PC-3 (cell line): ENCODE measurements at regions of chr17 and their contacts with region 1.

Region 1: DNA sequence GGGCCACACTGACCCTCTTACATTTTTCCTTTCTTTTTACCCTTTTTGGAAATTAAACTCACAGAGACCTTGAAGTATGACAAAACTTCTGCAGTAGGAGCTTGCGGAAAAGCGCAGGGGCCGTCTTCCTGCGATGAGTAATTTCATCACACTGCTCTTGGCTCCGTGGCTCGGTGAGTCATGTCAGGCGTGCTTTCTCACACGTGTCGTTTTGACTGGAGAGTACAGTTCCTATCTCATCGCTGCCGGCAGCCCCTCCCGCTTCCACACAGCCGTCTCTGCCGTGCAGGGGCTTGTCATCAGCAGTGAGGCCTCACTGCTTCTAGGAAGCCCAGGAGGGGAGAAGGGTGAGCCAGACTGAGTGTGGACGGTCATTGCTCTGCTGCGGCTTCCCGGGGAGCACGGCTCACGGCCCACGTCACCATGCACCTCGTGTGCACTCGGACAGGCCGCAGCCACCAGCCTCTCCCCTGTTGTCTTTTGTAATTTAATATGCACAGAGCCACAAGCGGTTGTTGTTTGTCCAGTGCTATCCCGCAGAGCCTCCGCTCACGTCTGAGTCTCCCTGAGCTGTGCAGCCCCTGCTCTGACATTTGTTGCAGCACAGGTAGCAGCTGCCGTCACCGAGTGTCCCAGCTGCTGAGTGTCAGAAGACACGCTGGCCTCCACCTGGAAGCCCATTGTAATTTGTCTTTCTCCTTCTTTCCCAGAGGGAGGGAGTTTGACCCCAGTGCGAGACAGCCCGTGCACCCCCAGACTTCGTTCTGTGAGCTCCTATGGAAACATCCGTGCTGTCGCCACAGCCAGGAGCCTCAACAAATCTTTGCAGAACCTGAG is 99.4 kb upstream of the CHMP6 start:
- DNase-seq: peak; percentile 98
- ATAC-seq: peak; percentile 72
- H3K4me3 ChIP-seq: peak overlapping the region; percentile 53
- H3K27ac ChIP-seq: peak overlapping the region; percentile 91
- H3K4me1 ChIP-seq: peaks cover 36% of the 10 kb centered on the region
- H3K27me3 ChIP-seq: no peaks in the 10 kb centered on the region
- CTCF ChIP-seq: no peak

Region 2: GRCh38 chr17:80454557-80455335 is 437.5 kb before region 1 on chr17:
- CTCF ChIA-PET with region 1: no interaction called
- POLR2A ChIA-PET with region 1: no interaction called
- intact Hi-C with region 1: loop called (anchors 10 kb)
- DNase-seq: peak; percentile 99
- ATAC-seq: peak; percentile 91
- H3K4me3 ChIP-seq: peak overlapping the region; percentile 80
- H3K27ac ChIP-seq: peak overlapping the region; percentile 69
- H3K4me1 ChIP-seq: peaks cover 20% of the 10 kb centered on the region
- H3K27me3 ChIP-seq: no peaks in the 10 kb centered on the region
- CTCF ChIP-seq: no peak

Region 3: DNA sequence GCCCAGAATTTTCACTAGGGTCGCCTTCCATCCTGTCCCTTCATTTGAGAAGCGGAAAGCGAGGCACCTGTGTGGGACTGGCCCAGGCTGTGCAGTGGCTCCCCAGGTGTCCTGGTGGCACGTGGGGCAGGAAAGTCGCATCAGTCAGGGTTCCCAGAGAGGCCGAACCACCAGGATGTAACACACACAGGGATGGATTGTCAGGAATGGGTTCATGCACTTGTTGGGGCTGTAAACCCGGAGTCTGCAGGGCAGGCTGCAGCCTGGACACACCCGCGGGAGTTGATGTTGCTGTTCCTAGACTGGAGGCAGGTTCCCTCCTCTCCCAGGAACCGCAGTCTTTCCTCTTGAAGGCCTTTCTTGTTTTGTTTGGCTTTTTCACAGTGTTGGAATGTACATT is 378.3 kb before region 1 on chr17:
- CTCF ChIA-PET with region 1: no interaction called
- POLR2A ChIA-PET with region 1: no interaction called
- intact Hi-C with region 1: no loop called
- DNase-seq: no peak
- ATAC-seq: no peak
- H3K4me3 ChIP-seq: no peak overlapping the region
- H3K27ac ChIP-seq: no peak overlapping the region
- H3K4me1 ChIP-seq: peaks cover 6% of the 10 kb centered on the region; the same call in 1 of the 2 replicates
- H3K27me3 ChIP-seq: no peaks in the 10 kb centered on the region; the same call in 1 of the 2 replicates
- CTCF ChIP-seq: no peak

Region 4: GRCh38 chr17:80773243-80773991 is 118.8 kb before region 1 on chr17:
- CTCF ChIA-PET with region 1: no interaction called
- POLR2A ChIA-PET with region 1: no interaction called
- intact Hi-C with region 1: no loop called
- DNase-seq: no peak
- ATAC-seq: peak; percentile 48; the same call in 1 of the 2 replicates
- H3K4me3 ChIP-seq: no peak overlapping the region
- H3K27ac ChIP-seq: no peak overlapping the region
- H3K4me1 ChIP-seq: no peaks in the 10 kb centered on the region
- H3K27me3 ChIP-seq: no peaks in the 10 kb centered on the region
- CTCF ChIP-seq: no peak

Region 5: GRCh38 chr17:80826955-80827645 is 65.1 kb before region 1 on chr17:
- CTCF ChIA-PET with region 1: no interaction called
- POLR2A ChIA-PET with region 1: no interaction called
- intact Hi-C with region 1: loop called (anchors 2 kb)
- DNase-seq: peak; percentile 96
- ATAC-seq: peak; percentile 99
- H3K4me3 ChIP-seq: no peak overlapping the region
- H3K27ac ChIP-seq: peak overlapping the region; percentile 96
- H3K4me1 ChIP-seq: peaks cover 36% of the 10 kb centered on the region
- H3K27me3 ChIP-seq: no peaks in the 10 kb centered on the region
- CTCF ChIP-seq: no peak; the same call in 1 of the 2 replicates

Region 6: GRCh38 chr17:80832888-80833583 is 59.2 kb before region 1 on chr17:
- CTCF ChIA-PET with region 1: no interaction called
- POLR2A ChIA-PET with region 1: no interaction called
- intact Hi-C with region 1: loop called (anchors 2 kb)
- DNase-seq: peak; percentile 96
- ATAC-seq: peak; percentile 98
- H3K4me3 ChIP-seq: peak overlapping the region; percentile 67
- H3K27ac ChIP-seq: peak overlapping the region; percentile 97
- H3K4me1 ChIP-seq: peaks cover 30% of the 10 kb centered on the region
- H3K27me3 ChIP-seq: no peaks in the 10 kb centered on the region
- CTCF ChIP-seq: no peak

Region 7: DNA sequence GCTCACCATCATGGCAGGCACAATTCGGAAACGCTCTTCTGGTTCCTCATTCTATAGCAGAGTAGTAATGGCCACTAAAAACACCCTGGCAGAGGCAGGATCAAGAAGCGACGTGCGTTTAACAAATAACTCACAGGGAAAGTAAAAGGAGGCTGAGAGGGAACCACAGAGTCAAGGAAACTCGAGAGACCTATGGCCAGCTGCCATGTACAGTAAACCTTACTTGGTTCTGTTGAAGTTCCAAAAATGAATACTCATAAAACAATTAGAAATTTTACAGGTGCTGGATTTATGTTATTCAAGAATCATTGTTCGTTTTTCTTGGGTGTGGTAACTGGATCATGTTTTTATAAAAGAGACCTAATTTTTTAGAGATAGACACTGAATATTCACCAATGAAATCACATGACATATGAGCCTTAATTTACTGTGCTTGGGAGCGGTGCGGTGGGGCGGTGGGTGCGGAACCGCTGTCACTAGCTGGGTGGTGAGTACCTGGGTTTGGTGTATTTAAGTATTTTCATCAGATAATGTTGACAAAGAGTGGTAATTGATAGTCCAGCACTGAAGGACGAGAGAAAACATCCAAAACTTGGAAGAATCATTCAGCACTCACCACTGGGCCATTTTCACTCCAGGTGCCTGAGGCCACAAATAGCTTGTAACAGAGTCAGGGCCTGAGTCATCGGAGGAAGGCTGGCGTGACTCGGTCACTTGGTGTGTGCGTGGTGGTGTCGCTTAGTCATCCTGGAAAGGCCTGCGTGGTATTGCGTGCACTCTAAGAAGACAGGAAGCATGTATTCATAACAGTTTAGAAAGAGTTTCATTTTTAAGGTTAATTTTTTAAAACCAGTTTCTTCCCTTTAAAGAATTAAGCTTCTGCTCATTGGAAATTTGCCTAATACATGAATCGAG is 36.0 kb before region 1 on chr17:
- CTCF ChIA-PET with region 1: no interaction called
- POLR2A ChIA-PET with region 1: interaction called, 4 read pairs
- intact Hi-C with region 1: loop called (anchors 1 kb)
- DNase-seq: peak; percentile 98
- ATAC-seq: peak; percentile 93
- H3K4me3 ChIP-seq: peak overlapping the region; percentile 35
- H3K27ac ChIP-seq: peak overlapping the region; percentile 100
- H3K4me1 ChIP-seq: peaks cover 45% of the 10 kb centered on the region
- H3K27me3 ChIP-seq: no peaks in the 10 kb centered on the region
- CTCF ChIP-seq: no peak